ENCODE measurements at regions of chr7 and their contacts with region 1.

Region 1: GRCh38 chr7:115910541-115911164 is 119.9 kb downstream of the TFEC start:
- DNase-seq: no peak
- H3K4me3 Mint-ChIP-seq: no peak overlapping the region
- H3K27ac Mint-ChIP-seq: no peak overlapping the region
- H3K4me1 Mint-ChIP-seq: no peaks in the 10 kb centered on the region
- H3K27me3 Mint-ChIP-seq: no peaks in the 10 kb centered on the region

Region 2: DNA sequence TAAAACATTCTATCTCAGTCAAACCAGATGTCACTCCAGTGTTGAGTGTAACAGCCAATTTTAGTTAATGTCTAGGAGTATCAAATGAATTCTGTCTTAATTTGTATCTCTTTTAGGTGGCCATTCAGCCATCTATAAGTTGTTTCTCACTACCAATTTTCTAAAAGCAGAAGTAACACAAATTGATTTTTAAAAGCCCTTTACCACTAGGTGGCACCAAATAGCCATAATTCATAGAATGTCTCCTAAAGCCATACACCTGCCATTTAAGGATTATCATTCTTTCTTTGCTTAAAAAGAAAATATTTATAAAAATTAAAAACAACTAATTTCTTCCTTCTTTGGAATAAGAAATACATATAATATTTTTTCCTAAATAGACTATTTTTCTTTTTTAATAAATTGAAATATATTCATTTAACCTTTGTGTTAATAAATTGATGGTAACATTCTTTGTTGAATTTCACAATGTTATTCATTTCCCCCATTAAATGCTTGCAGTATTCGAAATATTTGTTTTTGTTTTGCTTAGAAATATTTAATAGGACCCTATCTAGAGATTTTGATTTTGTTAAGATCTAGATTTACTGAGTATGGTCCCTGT is 1884.1 kb before region 1 on chr7:
- intact Hi-C with region 1: loop called (anchors 5 kb)
- DNase-seq: no peak
- H3K4me3 Mint-ChIP-seq: no peak overlapping the region
- H3K27ac Mint-ChIP-seq: no peak overlapping the region
- H3K4me1 Mint-ChIP-seq: no peaks in the 10 kb centered on the region
- H3K27me3 Mint-ChIP-seq: peaks cover 3% of the 10 kb centered on the region

Region 3: DNA sequence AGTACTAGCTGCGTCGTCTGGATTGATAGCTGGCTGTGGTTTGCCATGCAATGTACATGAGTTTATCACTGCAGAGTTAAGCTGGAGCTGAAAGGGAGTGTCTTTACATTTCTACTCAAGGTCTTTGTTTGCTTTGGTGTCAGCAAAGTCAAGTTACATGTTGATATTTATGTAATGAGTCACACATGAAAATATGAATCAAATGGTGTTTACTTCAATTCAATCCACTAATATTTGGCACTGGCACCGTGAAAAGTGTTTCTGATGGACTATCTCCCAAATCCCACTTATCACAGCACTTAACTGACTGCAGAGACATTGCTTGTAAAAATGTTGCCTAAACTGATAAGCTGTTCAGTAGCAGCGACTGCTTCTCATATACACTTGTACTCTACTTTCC is 276.0 kb before region 1 on chr7:
- intact Hi-C with region 1: no loop called
- DNase-seq: no peak
- H3K4me3 Mint-ChIP-seq: no peak overlapping the region
- H3K27ac Mint-ChIP-seq: no peak overlapping the region
- H3K4me1 Mint-ChIP-seq: no peaks in the 10 kb centered on the region
- H3K27me3 Mint-ChIP-seq: no peaks in the 10 kb centered on the region

Measured in activated T-helper 2 cell treated with anti-CD3 and anti-CD28 coated beads, Interferon-gamma antibody, Interleukin-2, Interleukin-4, amounts not matched to agents 10 μg/mL and 5 μg/mL and 100 μg/mL, durations not matched to agents 14 hours and 24 hours and 36 hours (primary cell).